ENCODE measurements at regions of chr2 and their contacts with region 1.

Region 1: GRCh38 chr2:217943446-217944389 is 59.1 kb downstream of the TNS1 start:
- DNase-seq: peak; percentile 91 to 94 (median 92)
- ATAC-seq: peak; percentile 87 to 90 (median 90)
- H3K4me3 ChIP-seq: peak overlapping the region; percentile 56 to 95 (median 82)
- H3K27ac ChIP-seq: peak overlapping the region; percentile 92 to 99 (median 96)
- H3K4me1 ChIP-seq: peaks cover 8 to 82% (median 65%) of the 10 kb centered on the region in 12 donors
- H3K27me3 ChIP-seq: no peaks in the 10 kb centered on the region
- CTCF ChIP-seq: peak; percentile 24 to 67 (median 52)
- POLR2A ChIP-seq: peak; percentile 64 to 96

Region 2: DNA sequence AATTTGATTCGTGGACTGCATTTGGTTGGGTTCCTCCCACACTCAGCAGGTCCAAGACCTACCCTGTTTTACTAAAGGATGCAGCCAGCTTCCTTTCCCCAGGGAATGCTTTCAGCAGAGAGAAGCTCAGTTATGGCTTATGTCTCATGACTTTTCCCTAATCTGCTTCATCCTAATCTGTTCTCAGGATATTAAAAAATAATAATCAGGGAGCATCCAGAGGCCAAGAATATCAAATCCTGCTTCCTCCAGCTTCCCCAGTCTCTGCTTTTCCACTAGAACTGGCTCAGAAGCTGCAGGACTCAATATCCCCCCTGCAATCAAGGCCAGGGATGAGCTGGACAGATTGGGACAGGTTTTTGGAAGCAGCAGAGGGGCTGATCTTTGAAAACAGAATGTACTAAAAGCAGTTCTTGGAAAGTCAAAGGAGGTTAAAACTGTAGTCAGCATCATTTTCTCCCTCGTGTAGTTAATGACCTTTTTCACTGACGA is 757.0 kb before region 1 on chr2:
- intact Hi-C with region 1: no loop called
- DNase-seq: peak in 4 of 5 donors; percentile 46 to 74 (median 66)
- ATAC-seq: peak; percentile 83 to 91 (median 88)
- H3K4me3 ChIP-seq: no peak overlapping the region
- H3K27ac ChIP-seq: peak overlapping the region in 10 of 12 donors; percentile 24 to 77 (median 48)
- H3K4me1 ChIP-seq: peaks cover 0 to 22% (median 8%) of the 10 kb centered on the region in 12 donors
- H3K27me3 ChIP-seq: peaks cover 0 to 3% (median 0%) of the 10 kb centered on the region in 9 donors
- CTCF ChIP-seq: no peak
- POLR2A ChIP-seq: no peak

Region 3: DNA sequence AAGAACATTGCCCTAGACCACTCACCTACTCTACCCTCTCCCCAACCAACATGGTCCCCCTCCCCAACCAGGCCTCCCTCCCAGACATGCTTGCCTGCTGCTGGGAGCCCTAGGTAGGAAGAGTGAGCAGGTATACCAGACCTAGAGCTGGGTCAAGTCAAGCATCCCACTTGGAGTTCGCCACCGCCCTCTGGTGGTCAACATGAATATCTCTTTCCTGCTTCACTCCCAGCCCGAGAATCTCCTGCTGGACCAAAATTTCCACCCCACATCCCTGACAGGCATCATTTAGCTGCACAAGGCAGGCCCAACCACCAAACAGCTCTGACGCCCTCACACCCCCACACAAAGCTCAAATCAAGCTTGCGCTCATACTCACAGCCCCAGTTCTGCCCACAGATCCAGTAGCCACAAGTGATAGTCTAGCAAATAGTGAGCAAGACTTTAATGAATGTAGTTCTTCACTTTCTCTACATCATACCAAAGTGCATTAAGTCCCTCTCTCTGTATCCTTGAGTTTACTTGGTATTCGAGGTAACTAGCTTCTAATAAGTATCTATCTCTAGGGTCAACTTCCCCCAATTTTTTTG is 56.9 kb before region 1 on chr2:
- intact Hi-C with region 1: loop called in 4 of 10 experiments (anchors 2 to 5 kb)
- DNase-seq: peak; percentile 74 to 82 (median 79)
- ATAC-seq: peak in 3 of 4 donors; percentile 9 to 41 (median 33)
- H3K4me3 ChIP-seq: no peak overlapping the region
- H3K27ac ChIP-seq: peak overlapping the region in 9 of 12 donors; percentile 19 to 79 (median 65)
- H3K4me1 ChIP-seq: peaks cover 8 to 72% (median 52%) of the 10 kb centered on the region in 12 donors
- H3K27me3 ChIP-seq: no peaks in the 10 kb centered on the region
- CTCF ChIP-seq: peak; percentile 70 to 90 (median 79)
- POLR2A ChIP-seq: no peak

Region 4: GRCh38 chr2:217980036-217980435 is 36.3 kb after region 1 on chr2:
- intact Hi-C with region 1: loop called in 4 of 10 experiments (anchors 2 to 10 kb)
- DNase-seq: peak in 2 of 5 donors; percentile 70 to 84
- ATAC-seq: peak in 3 of 4 donors; percentile 50 to 53 (median 53)
- H3K4me3 ChIP-seq: no peak overlapping the region
- H3K27ac ChIP-seq: peak overlapping the region in 9 of 12 donors; percentile 64 to 91 (median 87)
- H3K4me1 ChIP-seq: peaks cover 8 to 90% (median 57%) of the 10 kb centered on the region in 12 donors
- H3K27me3 ChIP-seq: no peaks in the 10 kb centered on the region
- CTCF ChIP-seq: no peak
- POLR2A ChIP-seq: no peak